B cell (primary cell): ENCODE measurements at regions of chr18 and their contacts with region 1.

Region 1: GRCh38 chr18:3665780-3666525 is 216.0 kb downstream of the TGIF1 start:
- DNase-seq: peak; percentile 80
- ATAC-seq: peak; percentile 88
- H3K4me3 ChIP-seq: no peak overlapping the region
- H3K4me3 Mint-ChIP-seq: peak overlapping the region; percentile 69
- H3K27ac ChIP-seq: no peak overlapping the region
- H3K27ac Mint-ChIP-seq: no peak overlapping the region
- H3K4me1 ChIP-seq: peaks cover 9 to 12% of the 10 kb centered on the region in 2 donors
- H3K4me1 Mint-ChIP-seq: peaks cover 16% of the 10 kb centered on the region
- H3K27me3 ChIP-seq: no peaks in the 10 kb centered on the region
- H3K27me3 Mint-ChIP-seq: no peaks in the 10 kb centered on the region
- CTCF ChIP-seq: peak; percentile 97

Region 2: GRCh38 chr18:2932247-2933181 is 733.4 kb before region 1 on chr18:
- CTCF ChIA-PET with region 1: interaction called, 6 read pairs
- POLR2A ChIA-PET with region 1: no interaction called
- intact Hi-C with region 1: loop called (anchors 5 kb)
- DNase-seq: peak; percentile 78
- ATAC-seq: peak; percentile 73
- H3K4me3 ChIP-seq: no peak overlapping the region
- H3K4me3 Mint-ChIP-seq: no peak overlapping the region
- H3K27ac ChIP-seq: no peak overlapping the region
- H3K27ac Mint-ChIP-seq: peak overlapping the region; percentile 64
- H3K4me1 ChIP-seq: peaks cover 0 to 4% of the 10 kb centered on the region in 2 donors
- H3K4me1 Mint-ChIP-seq: peaks cover 8% of the 10 kb centered on the region
- H3K27me3 ChIP-seq: no peaks in the 10 kb centered on the region
- H3K27me3 Mint-ChIP-seq: no peaks in the 10 kb centered on the region
- CTCF ChIP-seq: peak; percentile 92

Region 3: DNA sequence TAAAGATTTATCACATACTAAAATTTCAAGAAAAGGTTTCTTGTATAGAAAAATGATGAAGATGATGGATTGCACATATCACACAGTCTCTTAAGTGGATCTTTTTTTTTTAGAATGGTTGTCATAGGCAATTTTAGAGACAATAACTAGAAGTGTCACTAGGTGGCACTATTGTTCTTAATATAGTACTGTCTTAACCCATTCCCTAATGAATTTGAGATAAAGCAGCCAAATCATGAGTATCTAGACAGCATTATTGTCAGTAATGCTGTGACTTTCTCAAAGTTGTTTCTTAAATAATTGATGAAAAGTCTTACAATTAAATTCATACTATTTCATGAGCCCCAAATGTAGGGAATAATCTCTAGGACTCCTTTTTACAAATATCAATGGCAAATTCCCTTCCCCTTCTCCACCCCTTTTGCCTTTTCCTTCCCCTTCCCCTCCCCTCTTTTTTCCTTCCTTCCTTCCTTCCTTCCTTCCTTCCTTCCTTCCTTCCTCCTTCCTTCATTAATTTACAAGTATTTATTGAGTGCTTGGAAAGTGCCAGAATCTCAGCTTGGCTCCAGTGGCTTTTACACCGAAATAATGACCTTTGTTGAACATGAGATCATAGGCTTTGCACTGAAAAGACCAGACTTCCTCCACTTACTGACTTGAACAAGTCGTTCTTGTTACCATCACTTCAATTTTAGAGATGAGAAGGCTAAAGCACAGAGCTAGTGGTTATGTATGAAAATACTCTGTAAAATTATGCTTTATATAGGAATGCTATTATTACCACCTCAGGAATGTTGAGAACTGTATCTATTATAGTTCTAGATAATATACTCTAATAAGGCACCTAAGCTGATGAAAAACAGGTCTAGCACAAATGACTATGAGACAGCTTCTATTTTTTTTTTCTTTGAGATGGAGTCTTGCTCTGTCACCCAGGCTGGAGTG is 384.2 kb before region 1 on chr18:
- CTCF ChIA-PET with region 1: interaction called, 430 read pairs
- POLR2A ChIA-PET with region 1: interaction called, 3 read pairs
- intact Hi-C with region 1: loop called (anchors 1 kb)
- DNase-seq: peak; percentile 85
- ATAC-seq: peak; percentile 48
- H3K4me3 ChIP-seq: no peak overlapping the region
- H3K4me3 Mint-ChIP-seq: no peak overlapping the region
- H3K27ac ChIP-seq: no peak overlapping the region
- H3K27ac Mint-ChIP-seq: no peak overlapping the region
- H3K4me1 ChIP-seq: peaks cover 22 to 27% of the 10 kb centered on the region in 2 donors
- H3K4me1 Mint-ChIP-seq: peaks cover 29% of the 10 kb centered on the region
- H3K27me3 ChIP-seq: no peaks in the 10 kb centered on the region
- H3K27me3 Mint-ChIP-seq: no peaks in the 10 kb centered on the region
- CTCF ChIP-seq: peak; percentile 89

Region 4: GRCh38 chr18:3321133-3321812 is 344.7 kb before region 1 on chr18:
- CTCF ChIA-PET with region 1: interaction called, 19 read pairs
- POLR2A ChIA-PET with region 1: no interaction called
- intact Hi-C with region 1: loop called (anchors 1 kb)
- DNase-seq: no peak
- ATAC-seq: no peak
- H3K4me3 ChIP-seq: no peak overlapping the region
- H3K4me3 Mint-ChIP-seq: no peak overlapping the region
- H3K27ac ChIP-seq: no peak overlapping the region
- H3K27ac Mint-ChIP-seq: no peak overlapping the region
- H3K4me1 ChIP-seq: peaks cover 0 to 6% of the 10 kb centered on the region in 2 donors
- H3K4me1 Mint-ChIP-seq: peaks cover 13% of the 10 kb centered on the region
- H3K27me3 ChIP-seq: no peaks in the 10 kb centered on the region
- H3K27me3 Mint-ChIP-seq: peaks cover 4% of the 10 kb centered on the region
- CTCF ChIP-seq: no peak

Region 5: DNA sequence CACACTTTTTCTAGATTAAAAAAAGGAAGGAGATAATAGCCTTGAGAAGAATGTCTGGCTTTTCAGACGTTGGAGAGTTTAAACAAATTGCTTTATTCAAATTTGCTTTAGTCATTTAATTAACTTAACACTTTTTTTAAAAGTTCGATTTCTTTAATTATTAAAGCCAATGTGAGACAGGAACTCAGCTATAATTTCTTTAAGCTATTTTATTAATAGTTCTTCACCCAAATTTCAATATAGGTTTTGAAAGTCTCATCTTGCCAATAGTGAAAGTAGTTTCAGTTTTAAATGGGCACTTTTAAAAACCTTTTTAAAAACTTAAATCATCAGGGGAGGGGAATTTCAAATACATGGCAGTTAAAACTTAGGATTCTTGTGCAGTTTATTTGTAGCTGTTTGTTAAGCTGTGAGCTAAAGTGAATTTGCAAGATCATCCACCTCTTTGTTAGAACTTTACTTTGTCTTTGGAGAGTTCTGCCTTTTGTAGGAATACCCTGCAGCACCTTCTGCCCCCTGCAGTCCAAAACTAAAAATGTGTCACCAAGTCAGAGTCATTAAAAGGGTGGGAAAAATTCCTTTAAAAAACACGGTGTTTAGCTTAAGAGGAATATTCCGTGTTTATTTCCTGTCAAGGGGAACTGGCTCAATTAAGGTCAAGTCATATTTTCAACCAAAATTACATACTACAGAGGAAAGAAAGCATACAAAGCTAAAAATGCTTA is 211.4 kb before region 1 on chr18:
- CTCF ChIA-PET with region 1: interaction called, 58 read pairs
- POLR2A ChIA-PET with region 1: interaction called, 4 read pairs
- intact Hi-C with region 1: no loop called
- DNase-seq: peak; percentile 77
- ATAC-seq: no peak
- H3K4me3 ChIP-seq: peak overlapping the region; percentile 23 to 79 (median 55)
- H3K4me3 Mint-ChIP-seq: peak overlapping the region; percentile 99
- H3K27ac ChIP-seq: peak overlapping the region; percentile 53 to 82
- H3K27ac Mint-ChIP-seq: peak overlapping the region; percentile 93
- H3K4me1 ChIP-seq: peaks cover 8 to 40% of the 10 kb centered on the region in 2 donors
- H3K4me1 Mint-ChIP-seq: peaks cover 44% of the 10 kb centered on the region
- H3K27me3 ChIP-seq: no peaks in the 10 kb centered on the region
- H3K27me3 Mint-ChIP-seq: no peaks in the 10 kb centered on the region
- CTCF ChIP-seq: peak; percentile 89

Region 6: DNA sequence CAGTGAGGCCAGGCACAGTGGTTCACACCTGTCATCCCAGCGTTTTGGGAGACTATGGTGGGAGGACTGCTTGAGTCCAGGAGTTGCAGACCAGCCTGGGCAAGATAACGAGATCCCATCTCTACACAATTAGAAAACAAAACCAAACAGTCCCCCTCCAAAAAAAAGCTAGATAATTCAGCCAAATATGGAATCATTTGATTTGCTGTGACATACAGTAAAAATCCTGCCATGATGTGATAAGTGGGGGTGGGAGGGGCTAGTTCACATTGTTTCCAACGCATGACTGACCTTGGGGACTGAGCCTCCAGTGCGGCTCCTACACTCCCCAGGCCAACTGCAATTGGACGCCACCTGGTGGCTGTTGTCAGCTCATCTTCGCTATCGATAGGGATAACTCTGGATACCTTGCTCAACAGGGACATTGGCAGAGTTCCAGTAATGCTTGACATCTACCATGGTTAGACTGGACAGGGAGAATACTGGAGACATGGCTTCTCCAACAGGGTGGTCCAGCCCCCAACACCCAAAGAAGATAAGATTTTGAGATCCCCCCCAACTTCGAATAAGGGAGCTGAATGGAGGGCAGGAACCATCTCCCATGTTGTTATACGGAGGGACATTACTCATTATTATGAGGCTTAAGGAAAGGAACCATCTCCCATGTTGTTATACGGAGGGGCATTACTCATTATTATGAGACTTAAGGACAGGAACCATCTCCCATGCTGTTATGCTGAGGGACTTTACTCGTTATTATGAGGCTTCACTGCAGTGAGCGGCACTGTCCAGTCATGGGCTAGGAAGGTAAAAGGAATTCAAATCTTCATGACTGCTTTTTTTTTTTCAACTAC is 80.1 kb before region 1 on chr18:
- CTCF ChIA-PET with region 1: interaction called, 19 read pairs
- POLR2A ChIA-PET with region 1: no interaction called
- intact Hi-C with region 1: no loop called
- DNase-seq: peak; percentile 80
- ATAC-seq: peak; percentile 49
- H3K4me3 ChIP-seq: peak overlapping the region in 4 of 5 experiments; percentile 9 to 22 (median 18)
- H3K4me3 Mint-ChIP-seq: peak overlapping the region; percentile 69
- H3K27ac ChIP-seq: peak overlapping the region; percentile 81 to 87
- H3K27ac Mint-ChIP-seq: peak overlapping the region; percentile 83
- H3K4me1 ChIP-seq: peaks cover 42 to 43% of the 10 kb centered on the region in 2 donors
- H3K4me1 Mint-ChIP-seq: peaks cover 47% of the 10 kb centered on the region
- H3K27me3 ChIP-seq: no peaks in the 10 kb centered on the region
- H3K27me3 Mint-ChIP-seq: no peaks in the 10 kb centered on the region
- CTCF ChIP-seq: peak; percentile 57

Region 7: GRCh38 chr18:3692113-3692621 is 26.2 kb after region 1 on chr18:
- CTCF ChIA-PET with region 1: interaction called, 10 read pairs
- POLR2A ChIA-PET with region 1: no interaction called
- intact Hi-C with region 1: no loop called
- DNase-seq: no peak
- ATAC-seq: no peak
- H3K4me3 ChIP-seq: no peak overlapping the region
- H3K4me3 Mint-ChIP-seq: no peak overlapping the region
- H3K27ac ChIP-seq: no peak overlapping the region
- H3K27ac Mint-ChIP-seq: no peak overlapping the region
- H3K4me1 ChIP-seq: no peaks in the 10 kb centered on the region
- H3K4me1 Mint-ChIP-seq: no peaks in the 10 kb centered on the region
- H3K27me3 ChIP-seq: no peaks in the 10 kb centered on the region
- H3K27me3 Mint-ChIP-seq: peaks cover 5% of the 10 kb centered on the region
- CTCF ChIP-seq: no peak